ENCODE measurements at regions of chr3 and their contacts with region 1.

Region 1: GRCh38 chr3:42581709-42582473 is at the start of gene SEC22C:
- DNase-seq: peak; percentile 94 to 97 (median 95)
- H3K4me3 ChIP-seq: peak within 1 kb of the TSS; percentile 59 to 78
- H3K4me3 Mint-ChIP-seq: peak within 1 kb of the TSS; percentile 86 to 96 (median 94)
- H3K27ac ChIP-seq: peak within 1 kb of the TSS; percentile 96
- H3K27ac Mint-ChIP-seq: peak within 1 kb of the TSS; percentile 97 to 100 (median 99)
- H3K4me1 ChIP-seq: peaks cover 39% of the 10 kb centered on the region
- H3K4me1 Mint-ChIP-seq: peaks cover 38 to 59% (median 47%) of the 10 kb centered on the region in 4 donors
- H3K27me3 ChIP-seq: no peaks in the 10 kb centered on the region
- H3K27me3 Mint-ChIP-seq: no peaks in the 10 kb centered on the region
- total RNA-seq, gene SEC22C: 55.8 to 56.6 TPM

Region 2: GRCh38 chr3:42600111-42600988 is 18.5 kb after region 1 on chr3 and contains the start of gene NKTR:
- CTCF ChIA-PET with region 1: interaction called, 21 read pairs
- POLR2A ChIA-PET with region 1: interaction called, 40 read pairs
- intact Hi-C with region 1: loop called (anchors 1 kb)
- DNase-seq: peak; percentile 99 to 100 (median 100)
- H3K4me3 ChIP-seq: peak within 1 kb of the TSS; percentile 76 to 88
- H3K4me3 Mint-ChIP-seq: peak within 1 kb of the TSS; percentile 91 to 97 (median 94)
- H3K27ac ChIP-seq: peak within 1 kb of the TSS; percentile 85
- H3K27ac Mint-ChIP-seq: peak within 1 kb of the TSS; percentile 94 to 99 (median 98)
- H3K4me1 ChIP-seq: peaks cover 39% of the 10 kb centered on the region
- H3K4me1 Mint-ChIP-seq: peaks cover 27 to 49% (median 36%) of the 10 kb centered on the region in 4 donors
- H3K27me3 ChIP-seq: no peaks in the 10 kb centered on the region
- H3K27me3 Mint-ChIP-seq: no peaks in the 10 kb centered on the region
- total RNA-seq, gene NKTR: 256 to 269 TPM

Region 3: GRCh38 chr3:42613462-42613861 is 31.6 kb after region 1 on chr3:
- CTCF ChIA-PET with region 1: interaction called, 12 read pairs
- POLR2A ChIA-PET with region 1: interaction called, 8 read pairs
- intact Hi-C with region 1: loop called (anchors 5 kb)
- DNase-seq: no peak
- H3K4me3 ChIP-seq: no peak overlapping the region
- H3K4me3 Mint-ChIP-seq: peak overlapping the region in 4 of 8 donors; percentile 0 to 14 (median 2)
- H3K27ac ChIP-seq: no peak overlapping the region
- H3K27ac Mint-ChIP-seq: peak overlapping the region in 6 of 7 donors; percentile 0 to 93 (median 46)
- H3K4me1 ChIP-seq: peaks cover 54% of the 10 kb centered on the region
- H3K4me1 Mint-ChIP-seq: peaks cover 39 to 73% (median 54%) of the 10 kb centered on the region in 4 donors
- H3K27me3 ChIP-seq: no peaks in the 10 kb centered on the region
- H3K27me3 Mint-ChIP-seq: no peaks in the 10 kb centered on the region

Region 4: DNA sequence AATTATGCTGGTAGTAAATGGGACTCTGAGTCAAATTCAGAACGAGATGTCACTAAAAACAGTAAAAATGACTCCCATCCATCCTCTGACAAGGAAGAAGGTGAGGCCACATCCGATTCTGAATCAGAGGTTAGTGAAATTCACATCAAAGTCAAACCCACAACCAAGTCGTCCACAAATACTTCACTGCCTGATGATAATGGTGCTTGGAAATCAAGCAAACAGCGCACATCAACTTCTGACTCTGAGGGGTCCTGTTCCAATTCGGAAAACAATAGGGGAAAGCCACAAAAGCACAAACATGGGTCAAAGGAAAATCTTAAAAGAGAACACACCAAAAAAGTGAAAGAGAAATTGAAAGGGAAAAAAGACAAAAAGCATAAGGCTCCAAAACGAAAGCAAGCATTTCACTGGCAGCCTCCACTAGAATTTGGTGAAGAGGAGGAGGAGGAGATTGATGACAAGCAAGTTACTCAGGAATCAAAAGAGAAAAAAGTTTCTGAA is 56.5 kb after region 1 on chr3:
- CTCF ChIA-PET with region 1: interaction called, 9 read pairs
- POLR2A ChIA-PET with region 1: interaction called, 6 read pairs
- intact Hi-C with region 1: loop called (anchors 1 kb)
- DNase-seq: peak; percentile 65 to 78 (median 71)
- H3K4me3 ChIP-seq: peak overlapping the region in 1 of 2 donors; percentile 21
- H3K4me3 Mint-ChIP-seq: no peak overlapping the region
- H3K27ac ChIP-seq: peak overlapping the region; percentile 70
- H3K27ac Mint-ChIP-seq: no peak overlapping the region
- H3K4me1 ChIP-seq: peaks cover 43% of the 10 kb centered on the region
- H3K4me1 Mint-ChIP-seq: peaks cover 11 to 23% (median 13%) of the 10 kb centered on the region in 4 donors
- H3K27me3 ChIP-seq: no peaks in the 10 kb centered on the region
- H3K27me3 Mint-ChIP-seq: no peaks in the 10 kb centered on the region

Region 5: DNA sequence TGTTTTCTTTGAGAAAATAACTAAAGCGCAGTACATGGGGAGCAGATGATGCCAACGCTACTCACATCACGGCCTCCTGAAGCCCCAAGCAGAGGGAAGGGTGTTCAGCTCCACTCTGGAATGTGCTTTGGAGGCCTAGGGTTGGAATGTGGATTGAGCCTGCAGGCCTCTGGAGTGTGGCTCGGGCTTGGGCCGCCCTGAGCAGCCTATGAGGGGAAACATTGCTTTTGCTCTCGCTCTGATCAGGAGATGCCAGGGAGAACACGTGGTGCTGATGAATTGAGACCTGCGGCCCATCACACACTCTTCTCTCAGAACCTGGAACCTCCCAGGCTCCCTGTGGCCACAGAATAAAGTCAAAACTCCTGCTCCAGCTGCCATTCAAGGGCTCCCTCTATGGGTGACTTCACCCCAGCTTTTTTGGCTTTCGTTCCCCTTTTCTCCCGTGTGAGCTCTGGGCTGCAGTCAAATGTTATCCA is 167.9 kb after region 1 on chr3:
- CTCF ChIA-PET with region 1: interaction called, 16 read pairs
- POLR2A ChIA-PET with region 1: interaction called, 12 read pairs
- intact Hi-C with region 1: loop called (anchors 1 kb)
- DNase-seq: no peak
- H3K4me3 ChIP-seq: no peak overlapping the region
- H3K4me3 Mint-ChIP-seq: no peak overlapping the region
- H3K27ac ChIP-seq: no peak overlapping the region
- H3K27ac Mint-ChIP-seq: peak overlapping the region in 2 of 7 donors; percentile 53 to 65
- H3K4me1 ChIP-seq: peaks cover 24% of the 10 kb centered on the region
- H3K4me1 Mint-ChIP-seq: peaks cover 20 to 42% (median 31%) of the 10 kb centered on the region in 4 donors
- H3K27me3 ChIP-seq: no peaks in the 10 kb centered on the region
- H3K27me3 Mint-ChIP-seq: no peaks in the 10 kb centered on the region

Region 6: GRCh38 chr3:42804106-42804830 is 222.4 kb after region 1 on chr3 and contains the start of gene HIGD1A:
- CTCF ChIA-PET with region 1: no interaction called
- POLR2A ChIA-PET with region 1: interaction called, 3 read pairs
- intact Hi-C with region 1: loop called (anchors 1 kb)
- DNase-seq: peak; percentile 90 to 92 (median 91)
- H3K4me3 ChIP-seq: peak within 1 kb of the TSS; percentile 86 to 88
- H3K4me3 Mint-ChIP-seq: peak within 1 kb of the TSS; percentile 94 to 98 (median 96)
- H3K27ac ChIP-seq: peak within 1 kb of the TSS; percentile 81
- H3K27ac Mint-ChIP-seq: peak within 1 kb of the TSS; percentile 91 to 99 (median 96)
- H3K4me1 ChIP-seq: peaks cover 38% of the 10 kb centered on the region
- H3K4me1 Mint-ChIP-seq: peaks cover 24 to 57% (median 37%) of the 10 kb centered on the region in 4 donors
- H3K27me3 ChIP-seq: no peaks in the 10 kb centered on the region
- H3K27me3 Mint-ChIP-seq: peaks cover 6% of the 10 kb centered on the region in 2 donors
- total RNA-seq, gene HIGD1A: 24.3 to 26.7 TPM

Region 7: DNA sequence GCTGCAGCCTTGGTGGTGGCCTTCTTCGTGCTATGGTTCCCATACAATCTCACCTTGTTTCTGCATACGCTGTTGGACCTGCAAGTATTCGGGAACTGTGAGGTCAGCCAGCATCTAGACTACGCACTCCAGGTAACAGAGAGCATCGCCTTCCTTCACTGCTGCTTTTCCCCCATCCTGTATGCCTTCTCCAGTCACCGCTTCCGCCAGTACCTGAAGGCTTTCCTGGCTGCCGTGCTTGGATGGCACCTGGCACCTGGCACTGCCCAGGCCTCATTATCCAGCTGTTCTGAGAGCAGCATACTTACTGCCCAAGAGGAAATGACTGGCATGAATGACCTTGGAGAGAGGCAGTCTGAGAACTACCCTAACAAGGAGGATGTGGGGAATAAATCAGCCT is 283.4 kb after region 1 on chr3:
- CTCF ChIA-PET with region 1: no interaction called
- POLR2A ChIA-PET with region 1: no interaction called
- intact Hi-C with region 1: no loop called
- DNase-seq: no peak
- H3K4me3 ChIP-seq: no peak overlapping the region
- H3K4me3 Mint-ChIP-seq: no peak overlapping the region
- H3K27ac ChIP-seq: no peak overlapping the region
- H3K27ac Mint-ChIP-seq: no peak overlapping the region
- H3K4me1 ChIP-seq: no peaks in the 10 kb centered on the region
- H3K4me1 Mint-ChIP-seq: no peaks in the 10 kb centered on the region
- H3K27me3 ChIP-seq: no peaks in the 10 kb centered on the region
- H3K27me3 Mint-ChIP-seq: peaks cover 5 to 8% of the 10 kb centered on the region in 2 donors

Region 8: DNA sequence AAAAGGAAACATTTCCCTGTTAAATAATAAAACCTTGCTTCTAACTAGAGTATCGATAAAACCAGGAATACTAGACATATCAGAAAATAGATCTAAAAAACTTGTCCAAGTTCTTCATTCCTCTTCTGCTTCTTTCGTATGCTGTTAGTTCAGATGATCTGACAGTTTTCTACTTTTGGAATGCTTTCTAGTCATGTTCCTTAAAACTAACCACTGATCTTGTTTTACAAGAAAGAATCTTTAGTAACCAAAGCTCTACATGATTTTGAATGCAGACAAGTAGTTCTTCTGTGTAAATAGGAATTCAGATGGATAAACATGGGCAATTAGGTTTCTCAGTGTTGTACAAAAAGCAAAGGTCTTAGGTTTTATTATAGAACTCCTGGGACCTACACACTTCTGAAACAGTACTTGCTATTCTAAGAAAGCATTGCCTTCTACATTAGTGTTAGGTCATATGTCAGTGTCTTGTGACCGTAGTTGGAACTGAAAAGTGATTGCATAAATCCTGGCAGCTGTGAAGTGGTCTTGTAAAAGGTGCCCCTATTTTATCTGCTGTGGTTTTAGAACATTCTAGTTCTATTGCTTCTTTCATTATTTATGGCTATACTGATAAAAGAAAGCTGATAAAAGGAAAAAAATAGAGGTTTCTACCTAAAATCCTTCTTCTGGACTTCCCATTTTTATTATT is 745.1 kb after region 1 on chr3:
- CTCF ChIA-PET with region 1: no interaction called
- POLR2A ChIA-PET with region 1: no interaction called
- intact Hi-C with region 1: no loop called
- DNase-seq: no peak
- H3K4me3 ChIP-seq: no peak overlapping the region
- H3K4me3 Mint-ChIP-seq: peak overlapping the region in 7 of 8 donors; percentile 12 to 72 (median 46)
- H3K27ac ChIP-seq: no peak overlapping the region
- H3K27ac Mint-ChIP-seq: peak overlapping the region; percentile 45 to 91 (median 77)
- H3K4me1 ChIP-seq: peaks cover 74% of the 10 kb centered on the region
- H3K4me1 Mint-ChIP-seq: peaks cover 48 to 81% (median 66%) of the 10 kb centered on the region in 4 donors
- H3K27me3 ChIP-seq: no peaks in the 10 kb centered on the region
- H3K27me3 Mint-ChIP-seq: no peaks in the 10 kb centered on the region